ENCODE measurements at regions of chr5 and their contacts with region 1.

Region 1: GRCh38 chr5:142356716-142357473 is 32.1 kb upstream of the SPRY4 start:
- DNase-seq: peak; percentile 69 to 96 (median 88)
- ATAC-seq: peak; percentile 95
- H3K4me3 ChIP-seq: peak overlapping the region; percentile 62
- H3K4me3 Mint-ChIP-seq: peak overlapping the region; percentile 78 to 88 (median 86)
- H3K27ac ChIP-seq: peak overlapping the region; percentile 35
- H3K27ac Mint-ChIP-seq: peak overlapping the region; percentile 58 to 93 (median 86)
- H3K4me1 ChIP-seq: peaks cover 15 to 35% of the 10 kb centered on the region in 2 donors
- H3K4me1 Mint-ChIP-seq: peaks cover 24 to 64% (median 53%) of the 10 kb centered on the region in 7 donors
- H3K27me3 ChIP-seq: no peaks in the 10 kb centered on the region
- H3K27me3 Mint-ChIP-seq: peaks cover 0 to 12% (median 0%) of the 10 kb centered on the region in 5 donors

Region 2: DNA sequence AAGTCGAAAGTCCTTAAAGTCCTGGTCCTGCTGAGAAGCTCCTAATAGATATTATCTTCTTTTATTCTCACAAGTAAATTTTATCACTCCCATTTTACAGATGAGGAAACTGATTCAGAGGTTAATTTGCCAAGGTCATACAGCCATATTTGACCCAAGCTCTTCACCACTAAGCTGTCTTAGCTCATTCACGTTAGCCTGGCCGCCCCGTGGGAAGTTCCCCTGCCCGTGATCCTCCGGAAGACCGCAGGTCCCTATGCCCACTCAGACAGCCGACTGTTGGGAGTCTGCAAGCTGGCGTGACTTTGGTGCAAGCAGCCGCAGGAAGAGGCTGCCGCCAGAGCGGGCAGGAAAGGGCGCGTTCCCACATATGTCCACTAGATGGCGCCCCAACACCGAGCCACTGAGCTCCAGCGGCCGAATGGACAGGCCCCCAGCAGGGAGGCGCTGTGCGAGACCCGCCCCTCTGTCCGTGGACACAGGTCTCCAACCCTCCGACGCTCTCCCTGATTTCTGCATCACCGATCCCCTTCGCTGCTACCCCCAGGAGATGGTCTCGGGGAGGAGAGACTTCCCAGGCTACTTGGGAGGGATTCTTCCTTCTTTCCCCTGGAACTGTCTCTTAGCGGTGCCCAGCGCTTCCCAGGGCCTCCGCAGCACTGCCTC is 664.9 kb before region 1 on chr5:
- CTCF ChIA-PET with region 1: interaction called, 3 read pairs
- POLR2A ChIA-PET with region 1: no interaction called
- intact Hi-C with region 1: loop called in 1 of 2 experiments (anchors 10 kb)
- DNase-seq: peak; percentile 59 to 91 (median 78)
- ATAC-seq: peak; percentile 94
- H3K4me3 ChIP-seq: peak overlapping the region; percentile 48
- H3K4me3 Mint-ChIP-seq: peak overlapping the region in 9 of 10 donors; percentile 52 to 83 (median 69)
- H3K27ac ChIP-seq: no peak overlapping the region
- H3K27ac Mint-ChIP-seq: peak overlapping the region in 4 of 9 donors; percentile 2 to 60 (median 48)
- H3K4me1 ChIP-seq: peaks cover 12 to 16% of the 10 kb centered on the region in 2 donors
- H3K4me1 Mint-ChIP-seq: peaks cover 13 to 28% (median 16%) of the 10 kb centered on the region in 7 donors
- H3K27me3 ChIP-seq: no peaks in the 10 kb centered on the region
- H3K27me3 Mint-ChIP-seq: peaks cover 0 to 27% (median 11%) of the 10 kb centered on the region in 5 donors

Region 3: GRCh38 chr5:142012792-142013388 is 344.0 kb before region 1 on chr5 and contains the start of gene GNPDA1:
- CTCF ChIA-PET with region 1: interaction called, 3 read pairs
- POLR2A ChIA-PET with region 1: no interaction called
- intact Hi-C with region 1: loop called in 1 of 2 experiments (anchors 5 kb)
- DNase-seq: peak; percentile 38 to 81 (median 54)
- ATAC-seq: peak; percentile 87
- H3K4me3 ChIP-seq: peak within 1 kb of the TSS; percentile 68
- H3K4me3 Mint-ChIP-seq: peak within 1 kb of the TSS; percentile 76 to 93 (median 88)
- H3K27ac ChIP-seq: peak within 1 kb of the TSS; percentile 76
- H3K27ac Mint-ChIP-seq: peak within 1 kb of the TSS; percentile 87 to 93 (median 90)
- H3K4me1 ChIP-seq: peaks cover 40 to 53% of the 10 kb centered on the region in 2 donors
- H3K4me1 Mint-ChIP-seq: peaks cover 34 to 86% (median 80%) of the 10 kb centered on the region in 7 donors
- H3K27me3 ChIP-seq: no peaks in the 10 kb centered on the region
- H3K27me3 Mint-ChIP-seq: no peaks in the 10 kb centered on the region
- total RNA-seq, gene GNPDA1: 13.3 to 60.4 (median 26.4) TPM

Region 4: GRCh38 chr5:142221091-142221860 is 135.6 kb before region 1 on chr5:
- CTCF ChIA-PET with region 1: no interaction called
- POLR2A ChIA-PET with region 1: no interaction called
- intact Hi-C with region 1: loop called (anchors 1 to 2 kb)
- DNase-seq: no peak
- ATAC-seq: no peak
- H3K4me3 ChIP-seq: no peak overlapping the region
- H3K4me3 Mint-ChIP-seq: peak overlapping the region in 3 of 10 donors; percentile 17 to 31 (median 19)
- H3K27ac ChIP-seq: no peak overlapping the region
- H3K27ac Mint-ChIP-seq: peak overlapping the region in 3 of 9 donors; percentile 3 to 52 (median 6)
- H3K4me1 ChIP-seq: peaks cover 6 to 25% of the 10 kb centered on the region in 2 donors
- H3K4me1 Mint-ChIP-seq: peaks cover 18 to 39% (median 34%) of the 10 kb centered on the region in 7 donors
- H3K27me3 ChIP-seq: no peaks in the 10 kb centered on the region
- H3K27me3 Mint-ChIP-seq: peaks cover 0 to 10% (median 0%) of the 10 kb centered on the region in 5 donors

Region 5: GRCh38 chr5:142235055-142235797 is 121.7 kb before region 1 on chr5:
- CTCF ChIA-PET with region 1: no interaction called
- POLR2A ChIA-PET with region 1: no interaction called
- intact Hi-C with region 1: no loop called
- DNase-seq: no peak
- ATAC-seq: no peak
- H3K4me3 ChIP-seq: no peak overlapping the region
- H3K4me3 Mint-ChIP-seq: no peak overlapping the region
- H3K27ac ChIP-seq: no peak overlapping the region
- H3K27ac Mint-ChIP-seq: no peak overlapping the region
- H3K4me1 ChIP-seq: no peaks in the 10 kb centered on the region
- H3K4me1 Mint-ChIP-seq: peaks cover 4 to 16% (median 8%) of the 10 kb centered on the region in 7 donors
- H3K27me3 ChIP-seq: no peaks in the 10 kb centered on the region
- H3K27me3 Mint-ChIP-seq: peaks cover 0 to 11% (median 6%) of the 10 kb centered on the region in 5 donors

Region 6: DNA sequence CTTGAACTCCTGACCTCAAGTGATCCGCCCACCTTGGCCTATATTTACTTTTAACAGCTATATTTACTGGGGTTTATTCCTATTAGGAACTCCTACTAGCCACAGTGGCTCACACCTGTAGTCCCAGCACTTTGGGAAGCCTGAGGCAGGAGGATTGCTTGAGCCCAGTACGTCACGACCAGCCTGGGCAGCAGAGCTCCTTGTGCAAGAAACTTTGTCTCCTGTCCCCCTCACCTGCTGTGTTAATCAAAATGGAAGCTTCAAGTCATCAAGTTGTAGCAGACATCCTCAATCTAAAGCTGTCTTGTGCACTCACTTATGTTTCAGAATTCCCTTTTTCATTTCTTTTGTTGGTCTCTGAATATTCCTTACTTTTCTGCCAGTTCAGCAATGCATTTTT is 17.1 kb before region 1 on chr5:
- CTCF ChIA-PET with region 1: interaction called, 3 read pairs
- POLR2A ChIA-PET with region 1: interaction called, 7 read pairs
- intact Hi-C with region 1: loop called in 1 of 2 experiments (anchors 2 kb)
- DNase-seq: no peak
- ATAC-seq: no peak
- H3K4me3 ChIP-seq: no peak overlapping the region
- H3K4me3 Mint-ChIP-seq: no peak overlapping the region
- H3K27ac ChIP-seq: no peak overlapping the region
- H3K27ac Mint-ChIP-seq: no peak overlapping the region
- H3K4me1 ChIP-seq: no peaks in the 10 kb centered on the region
- H3K4me1 Mint-ChIP-seq: peaks cover 0 to 4% (median 0%) of the 10 kb centered on the region in 7 donors
- H3K27me3 ChIP-seq: no peaks in the 10 kb centered on the region
- H3K27me3 Mint-ChIP-seq: peaks cover 0 to 18% (median 0%) of the 10 kb centered on the region in 5 donors